Calu3 (cell line): ENCODE measurements at regions of chr9 and their contacts with region 1.

Region 1: DNA sequence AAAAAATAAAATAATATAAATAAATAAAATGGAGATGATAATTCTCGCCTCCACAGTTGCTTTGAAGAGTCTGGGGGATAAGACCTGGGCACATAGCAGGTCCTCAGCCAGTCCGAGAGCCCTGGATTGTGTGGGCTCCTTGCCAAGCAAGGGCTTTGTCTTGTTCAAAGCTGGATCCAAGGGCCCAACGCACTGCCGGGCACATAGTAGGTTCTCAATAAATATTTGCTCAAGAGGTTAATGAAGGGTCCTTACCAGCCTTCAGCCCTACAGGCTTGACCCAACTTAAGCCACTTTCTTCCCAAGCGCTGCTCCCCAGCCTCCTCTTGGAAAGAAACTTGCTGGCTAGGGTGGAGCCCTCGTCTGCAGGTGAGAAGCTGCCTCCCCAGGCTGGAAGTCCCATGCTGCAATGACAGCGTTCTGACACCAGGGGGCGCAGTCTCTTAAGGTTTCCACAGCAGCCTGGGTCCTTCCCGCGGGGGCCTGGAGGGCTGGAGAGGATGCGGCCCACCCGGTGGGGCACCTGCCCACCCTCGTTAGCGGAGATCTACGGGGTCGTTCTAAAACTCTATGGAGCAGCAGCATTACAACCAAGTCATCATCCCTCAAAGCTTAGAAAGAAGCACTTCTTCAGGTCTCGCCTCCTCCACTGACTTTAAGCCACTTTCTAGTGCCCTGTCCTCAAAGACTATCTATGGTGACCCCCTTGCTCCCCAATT is 115.2 kb downstream of the LHX2 start:
- DNase-seq: peak; percentile 79
- H3K4me3 Mint-ChIP-seq: no peak overlapping the region
- H3K27ac Mint-ChIP-seq: no peak overlapping the region
- H3K4me1 Mint-ChIP-seq: peaks cover 12% of the 10 kb centered on the region
- H3K27me3 Mint-ChIP-seq: no peaks in the 10 kb centered on the region
- CTCF ChIP-seq: peak; percentile 93

Region 2: DNA sequence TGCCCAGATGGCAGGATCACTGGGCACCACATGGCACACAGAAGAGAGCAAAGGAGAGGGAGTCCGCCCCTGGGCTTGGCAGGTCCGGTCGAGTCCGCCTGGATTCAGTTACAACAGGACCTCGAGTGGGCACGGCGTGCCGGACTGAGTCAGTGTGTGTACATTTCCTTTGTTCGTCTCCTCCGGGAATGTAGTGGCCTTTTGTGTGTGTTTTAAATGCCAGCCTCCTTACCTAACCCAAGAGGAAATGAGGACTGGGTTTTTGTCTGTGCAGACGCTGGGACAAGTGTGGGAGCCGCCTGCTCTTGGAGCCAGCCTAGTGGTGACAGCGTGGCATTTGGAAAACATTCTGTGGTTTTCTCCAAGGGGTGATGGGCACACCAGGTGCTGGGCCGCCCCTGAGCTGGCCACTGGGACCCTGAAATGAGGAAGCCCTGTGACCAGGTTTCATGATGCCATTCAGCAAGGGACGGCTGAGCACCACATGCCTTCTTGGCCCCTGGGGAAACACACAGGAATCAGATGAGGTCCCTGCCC is 140.6 kb after region 1 on chr9:
- CTCF ChIA-PET with region 1: interaction called, 5 read pairs
- intact Hi-C with region 1: loop called (anchors 10 kb)
- DNase-seq: peak; percentile 64
- H3K4me3 Mint-ChIP-seq: peak overlapping the region; percentile 55
- H3K27ac Mint-ChIP-seq: peak overlapping the region; percentile 81
- H3K4me1 Mint-ChIP-seq: peaks cover 28% of the 10 kb centered on the region
- H3K27me3 Mint-ChIP-seq: no peaks in the 10 kb centered on the region
- CTCF ChIP-seq: no peak

Region 3: GRCh38 chr9:124320062-124320973 is 193.6 kb after region 1 on chr9:
- CTCF ChIA-PET with region 1: interaction called, 4 read pairs
- intact Hi-C with region 1: loop called (anchors 5 kb)
- DNase-seq: peak; percentile 75
- H3K4me3 Mint-ChIP-seq: no peak overlapping the region
- H3K27ac Mint-ChIP-seq: no peak overlapping the region
- H3K4me1 Mint-ChIP-seq: no peaks in the 10 kb centered on the region
- H3K27me3 Mint-ChIP-seq: no peaks in the 10 kb centered on the region
- CTCF ChIP-seq: peak; percentile 25

Region 4: GRCh38 chr9:124392871-124393460 is 266.2 kb after region 1 on chr9:
- CTCF ChIA-PET with region 1: no interaction called
- intact Hi-C with region 1: loop called (anchors 10 kb)
- DNase-seq: peak; percentile 44
- H3K4me3 Mint-ChIP-seq: no peak overlapping the region
- H3K27ac Mint-ChIP-seq: no peak overlapping the region
- H3K4me1 Mint-ChIP-seq: peaks cover 34% of the 10 kb centered on the region
- H3K27me3 Mint-ChIP-seq: no peaks in the 10 kb centered on the region
- CTCF ChIP-seq: no peak